OCI-LY7 (cell line): ENCODE measurements at regions of chr17 and their contacts with region 1.

Region 1: DNA sequence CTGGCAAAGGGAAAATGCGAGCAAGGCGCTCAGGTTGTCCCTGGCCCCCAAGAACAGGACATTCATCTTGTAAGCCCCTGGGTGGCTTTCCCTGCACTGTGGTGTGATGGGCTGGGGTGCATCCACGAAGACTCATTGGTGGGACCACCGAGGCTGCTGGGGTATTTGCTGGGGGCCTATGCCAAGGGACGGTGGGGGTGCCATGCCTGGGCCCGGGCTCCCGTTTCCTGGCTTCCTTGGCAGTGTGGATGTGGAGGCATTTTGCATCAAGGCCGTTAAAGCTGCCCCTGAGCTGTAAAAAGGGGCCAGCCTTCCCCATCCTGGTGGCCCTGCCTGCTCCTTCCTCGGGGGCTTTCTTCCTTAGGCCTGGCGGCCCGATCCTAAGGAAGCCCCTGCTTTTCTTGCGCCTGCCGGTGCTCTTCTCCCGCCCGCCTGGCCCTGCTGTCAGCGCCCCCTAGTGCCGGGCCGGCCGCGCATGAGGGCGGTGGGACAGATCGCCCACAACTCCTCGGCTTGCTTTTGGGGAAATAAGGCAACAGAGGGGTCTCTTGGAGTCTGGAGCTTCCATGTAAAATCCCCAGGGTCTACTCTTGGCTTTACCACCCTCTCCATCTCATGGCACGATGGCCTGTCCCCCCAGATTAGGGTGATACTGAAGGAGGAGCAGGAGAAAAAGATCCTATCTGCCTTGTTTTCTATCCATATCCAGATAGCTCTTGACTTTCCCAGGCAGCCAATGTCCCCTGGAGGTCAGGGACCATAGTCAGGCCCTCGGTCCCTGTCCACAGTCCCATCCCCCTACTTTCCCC is 9.8 kb upstream of the TBX2 start:
- DNase-seq: peak; percentile 42
- H3K4me3 ChIP-seq: no peak overlapping the region
- H3K27ac ChIP-seq: no peak overlapping the region
- H3K4me1 ChIP-seq: no peaks in the 10 kb centered on the region
- CTCF ChIP-seq: peak; percentile 96

Region 2: DNA sequence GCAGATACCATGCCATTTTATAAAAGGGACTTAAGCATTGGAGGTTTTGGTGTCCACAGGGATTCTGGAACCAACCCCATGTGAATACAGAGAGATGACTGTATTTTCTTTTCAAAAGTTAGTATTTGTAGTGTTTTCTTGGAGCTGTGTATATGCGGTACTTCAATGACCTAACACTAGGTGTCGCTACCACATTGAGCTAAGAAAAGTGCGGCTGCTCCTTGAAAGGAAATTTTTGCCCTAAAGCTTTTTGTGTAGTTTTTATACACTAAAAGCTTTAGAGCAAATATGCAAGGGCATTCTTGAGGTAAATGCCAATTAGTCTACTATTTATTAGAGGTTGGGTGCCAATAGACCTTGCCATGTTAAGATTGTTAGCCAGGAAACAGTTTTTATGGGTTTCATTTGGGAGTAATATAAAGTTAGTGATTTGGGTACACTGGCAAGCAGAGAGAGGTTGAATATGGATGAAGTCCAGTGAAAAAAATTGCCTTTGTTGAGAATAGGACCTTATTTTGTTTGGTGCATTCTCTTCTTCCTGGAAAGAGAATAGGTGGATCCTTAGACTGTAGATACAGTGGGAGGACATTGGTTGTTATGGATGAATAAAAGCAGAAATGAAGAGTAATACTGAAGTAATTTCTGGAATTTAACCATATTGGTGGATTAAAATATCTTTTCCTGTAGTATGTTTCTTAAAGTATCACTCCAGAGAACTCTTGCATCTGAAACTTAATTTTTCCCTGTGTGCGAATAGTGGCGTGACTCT is 668.9 kb before region 1 on chr17:
- CTCF ChIA-PET with region 1: no interaction called
- POLR2A ChIA-PET with region 1: no interaction called
- intact Hi-C with region 1: loop called (anchors 5 kb)
- DNase-seq: peak; percentile 60
- H3K4me3 ChIP-seq: no peak overlapping the region
- H3K27ac ChIP-seq: no peak overlapping the region
- H3K4me1 ChIP-seq: no peaks in the 10 kb centered on the region
- CTCF ChIP-seq: peak; percentile 98

Region 3: GRCh38 chr17:60959011-60959410 is 430.9 kb before region 1 on chr17:
- CTCF ChIA-PET with region 1: no interaction called
- POLR2A ChIA-PET with region 1: no interaction called
- intact Hi-C with region 1: no loop called
- DNase-seq: no peak
- H3K4me3 ChIP-seq: no peak overlapping the region
- H3K27ac ChIP-seq: no peak overlapping the region
- H3K4me1 ChIP-seq: no peaks in the 10 kb centered on the region
- CTCF ChIP-seq: no peak

Region 4: DNA sequence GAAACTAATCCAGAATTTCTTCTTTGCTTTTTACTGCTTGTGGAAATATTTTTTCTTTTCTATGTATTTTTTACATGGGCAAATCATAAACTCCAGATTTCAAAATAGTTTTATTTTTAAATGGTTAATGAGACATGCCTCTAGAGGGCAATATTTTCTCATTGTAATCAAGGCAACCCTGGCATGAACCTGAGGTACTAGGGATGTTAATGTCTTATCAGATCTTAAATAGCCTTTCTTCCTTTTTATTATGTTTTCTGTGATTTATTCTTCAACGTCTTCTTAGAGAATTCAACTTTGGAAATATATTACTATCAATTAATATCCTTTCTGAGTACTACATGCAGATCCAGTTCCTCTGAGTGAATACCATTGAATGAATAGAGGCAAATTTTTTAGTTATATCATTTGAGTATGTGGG is 387.5 kb before region 1 on chr17:
- CTCF ChIA-PET with region 1: no interaction called
- POLR2A ChIA-PET with region 1: interaction called, 4 read pairs
- intact Hi-C with region 1: loop called (anchors 5 kb)
- DNase-seq: peak; percentile 36
- H3K4me3 ChIP-seq: no peak overlapping the region
- H3K27ac ChIP-seq: no peak overlapping the region
- H3K4me1 ChIP-seq: no peaks in the 10 kb centered on the region
- CTCF ChIP-seq: peak; percentile 79

Region 5: DNA sequence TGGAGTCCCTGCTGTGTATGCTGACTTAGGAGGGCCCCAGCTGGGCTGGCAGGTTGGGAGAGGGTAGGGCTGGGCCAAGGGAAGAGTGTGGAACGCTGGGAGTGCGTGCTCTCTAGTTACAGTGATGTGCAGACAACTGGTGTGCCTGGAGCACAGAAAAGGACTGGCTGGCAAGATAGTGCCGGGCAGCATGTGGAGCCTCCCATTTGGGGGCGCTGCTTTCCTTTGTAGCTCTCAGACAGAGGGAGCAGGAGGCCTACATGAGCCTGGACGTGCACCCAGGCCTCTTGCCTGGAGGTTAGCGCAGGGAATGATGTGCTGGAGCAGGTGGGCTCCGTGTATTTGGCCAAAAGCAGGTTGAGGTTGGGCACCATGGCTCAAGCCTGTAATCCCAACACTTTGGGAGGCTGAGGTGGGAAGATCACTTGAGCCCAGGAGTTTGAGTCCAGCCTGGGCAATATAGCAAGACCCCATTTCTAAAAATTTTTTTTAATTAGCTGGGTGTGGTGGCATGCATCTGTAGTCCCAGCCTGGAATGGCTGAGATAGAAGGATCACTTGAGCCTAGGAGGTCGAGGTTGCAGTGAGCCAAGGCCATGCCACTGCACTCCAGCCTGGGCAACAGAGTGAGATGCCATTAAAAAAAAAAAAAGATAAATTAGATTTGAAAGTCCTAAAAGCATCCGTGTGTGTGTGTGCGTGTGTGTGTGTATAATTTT is 36.3 kb after region 1 on chr17:
- CTCF ChIA-PET with region 1: no interaction called
- POLR2A ChIA-PET with region 1: no interaction called
- intact Hi-C with region 1: no loop called
- DNase-seq: no peak
- H3K4me3 ChIP-seq: no peak overlapping the region
- H3K27ac ChIP-seq: no peak overlapping the region
- H3K4me1 ChIP-seq: no peaks in the 10 kb centered on the region
- CTCF ChIP-seq: peak; percentile 31; the same call in 1 of the 2 replicates